Posterior cingulate gyrus (tissue), 11 donors: ENCODE measurements at regions of chr6 and their contacts with region 1.

Region 1: GRCh38 chr6:85756982-85757381 is 114.3 kb upstream of the SYNCRIP start:
- DNase-seq: no peak

Region 2: GRCh38 chr6:84825461-84825860 is 931.5 kb before region 1 on chr6:
- intact Hi-C with region 1: no loop called
- DNase-seq: no peak

Region 3: DNA sequence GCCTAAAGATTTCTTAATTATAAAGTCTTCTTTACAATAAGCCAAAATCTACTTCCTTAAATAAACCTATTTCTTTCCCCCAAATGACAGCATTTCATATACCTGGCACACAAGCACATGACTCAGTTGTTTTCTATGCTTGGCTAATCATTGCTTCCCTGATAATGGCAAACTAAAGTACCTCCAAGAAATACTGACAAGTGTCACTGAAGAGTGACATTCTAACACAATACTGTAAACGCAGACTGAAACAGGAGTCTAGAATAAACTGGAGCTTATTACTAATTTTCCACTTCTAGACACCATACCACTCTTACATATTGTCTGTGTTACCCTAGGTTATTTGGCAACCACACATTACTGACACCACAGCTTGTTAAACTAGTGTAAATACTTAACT is 128.6 kb before region 1 on chr6:
- intact Hi-C with region 1: no loop called
- DNase-seq: no peak

Region 4: GRCh38 chr6:87029711-87030314 is 1272.8 kb after region 1 on chr6:
- intact Hi-C with region 1: loop called (anchors 5 kb)
- DNase-seq: no peak